Mammary epithelial cell (primary cell): ENCODE measurements at regions of chr19 and their contacts with region 1.

Region 1: GRCh38 chr19:11756965-11757364 is 9.8 kb upstream of the ZNF441 start:
- DNase-seq: no peak
- H3K4me3 ChIP-seq: no peak overlapping the region
- H3K27ac ChIP-seq: no peak overlapping the region
- H3K4me1 ChIP-seq: no peaks in the 10 kb centered on the region
- H3K27me3 ChIP-seq: no peaks in the 10 kb centered on the region
- CTCF ChIP-seq: no peak

Region 2: GRCh38 chr19:11684987-11685675 is 71.8 kb before region 1 on chr19:
- CTCF ChIA-PET with region 1: no interaction called
- dilution Hi-C with region 1: loop called (anchors 5 kb)
- in situ Hi-C with region 1: no loop called
- intact Hi-C with region 1: no loop called
- DNase-seq: no peak
- H3K4me3 ChIP-seq: no peak overlapping the region
- H3K27ac ChIP-seq: no peak overlapping the region
- H3K4me1 ChIP-seq: no peaks in the 10 kb centered on the region
- H3K27me3 ChIP-seq: no peaks in the 10 kb centered on the region
- CTCF ChIP-seq: no peak

Region 3: DNA sequence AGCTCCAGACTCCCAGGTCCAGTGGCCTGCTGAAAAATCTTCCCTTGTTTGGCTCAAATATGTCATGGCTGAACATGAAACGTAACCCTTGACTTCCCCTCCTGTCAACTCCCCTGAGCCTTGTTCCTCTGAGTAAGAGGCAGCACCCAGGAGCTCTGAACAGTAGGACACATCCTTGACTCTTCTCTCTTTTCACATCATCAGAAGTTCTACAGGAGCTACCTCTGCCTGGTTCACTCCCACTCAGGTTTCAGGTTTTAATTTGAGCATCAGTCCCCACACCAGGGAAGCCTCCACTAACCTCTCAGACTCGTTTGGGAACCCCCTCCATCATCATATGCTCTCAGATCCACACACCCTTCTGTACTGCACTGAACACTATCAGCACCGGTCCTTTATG is 48.5 kb before region 1 on chr19:
- CTCF ChIA-PET with region 1: no interaction called
- dilution Hi-C with region 1: loop called (anchors 5 kb)
- in situ Hi-C with region 1: no loop called
- intact Hi-C with region 1: no loop called
- DNase-seq: no peak
- H3K4me3 ChIP-seq: no peak overlapping the region
- H3K27ac ChIP-seq: no peak overlapping the region
- H3K4me1 ChIP-seq: no peaks in the 10 kb centered on the region
- H3K27me3 ChIP-seq: no peaks in the 10 kb centered on the region
- CTCF ChIP-seq: no peak

Region 4: DNA sequence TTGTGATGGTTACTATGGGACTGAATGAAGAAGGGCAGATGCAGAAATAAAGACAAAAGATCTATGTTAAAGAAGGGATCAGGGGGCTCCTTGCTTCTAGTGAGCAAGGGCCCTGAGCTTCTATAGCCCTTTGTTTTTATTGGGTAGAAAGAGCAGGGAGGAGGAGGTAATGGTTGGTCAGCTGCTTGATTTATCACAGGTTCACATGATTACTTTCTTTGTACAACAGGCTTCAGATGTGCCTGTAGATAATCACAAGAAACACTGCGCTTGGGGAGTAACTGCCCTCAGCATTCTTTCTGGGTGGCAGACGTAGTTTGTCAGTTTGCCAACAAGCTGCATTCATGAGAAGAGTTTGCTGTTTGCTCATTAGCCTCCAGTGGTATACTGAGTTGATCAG is 86.8 kb after region 1 on chr19:
- CTCF ChIA-PET with region 1: no interaction called
- dilution Hi-C with region 1: loop called (anchors 5 kb)
- in situ Hi-C with region 1: no loop called
- intact Hi-C with region 1: no loop called
- DNase-seq: no peak
- H3K4me3 ChIP-seq: no peak overlapping the region
- H3K27ac ChIP-seq: no peak overlapping the region
- H3K4me1 ChIP-seq: no peaks in the 10 kb centered on the region
- H3K27me3 ChIP-seq: no peaks in the 10 kb centered on the region
- CTCF ChIP-seq: no peak